ENCODE measurements at regions of chr17 and their contacts with region 1.

Region 1: GRCh38 chr17:58112970-58113631 is 29.9 kb downstream of the DYNLL2 start:
- DNase-seq: peak; percentile 54 to 66 (median 62)
- H3K4me3 ChIP-seq: no peak overlapping the region
- H3K4me3 Mint-ChIP-seq: no peak overlapping the region
- H3K27ac ChIP-seq: no peak overlapping the region
- H3K27ac Mint-ChIP-seq: no peak overlapping the region
- H3K4me1 ChIP-seq: no peaks in the 10 kb centered on the region
- H3K4me1 Mint-ChIP-seq: peaks cover 2% of the 10 kb centered on the region
- H3K27me3 ChIP-seq: peaks cover 2% of the 10 kb centered on the region in 2 donors
- H3K27me3 Mint-ChIP-seq: peaks cover 6 to 16% (median 12%) of the 10 kb centered on the region in 3 donors
- CTCF ChIP-seq: peak; percentile 91

Region 2: DNA sequence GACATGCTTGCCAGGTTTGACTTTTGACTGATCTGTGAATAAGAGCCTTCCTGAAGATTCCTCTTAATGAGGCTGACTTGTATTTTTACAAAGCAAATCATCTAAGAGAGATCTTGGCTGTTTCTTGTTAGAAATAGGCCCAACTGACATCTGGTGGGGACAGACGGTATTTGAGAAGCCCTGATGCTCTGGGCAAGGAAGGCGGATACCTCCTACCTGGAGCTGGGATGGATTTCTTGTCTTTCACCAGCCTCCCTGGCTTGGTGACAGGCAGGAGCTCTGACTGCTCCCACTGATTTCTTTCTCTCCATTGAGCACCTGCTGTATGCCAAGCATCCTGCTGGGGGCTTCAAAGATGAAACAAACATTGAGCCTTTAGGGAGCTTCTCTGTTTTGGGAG is 987.7 kb before region 1 on chr17:
- intact Hi-C with region 1: loop called (anchors 5 to 10 kb)
- DNase-seq: no peak
- H3K4me3 ChIP-seq: no peak overlapping the region
- H3K4me3 Mint-ChIP-seq: no peak overlapping the region
- H3K27ac ChIP-seq: no peak overlapping the region
- H3K27ac Mint-ChIP-seq: no peak overlapping the region
- H3K4me1 ChIP-seq: no peaks in the 10 kb centered on the region
- H3K4me1 Mint-ChIP-seq: no peaks in the 10 kb centered on the region
- H3K27me3 ChIP-seq: no peaks in the 10 kb centered on the region
- H3K27me3 Mint-ChIP-seq: peaks cover 0 to 1% (median 0%) of the 10 kb centered on the region in 3 donors
- CTCF ChIP-seq: no peak

Region 3: DNA sequence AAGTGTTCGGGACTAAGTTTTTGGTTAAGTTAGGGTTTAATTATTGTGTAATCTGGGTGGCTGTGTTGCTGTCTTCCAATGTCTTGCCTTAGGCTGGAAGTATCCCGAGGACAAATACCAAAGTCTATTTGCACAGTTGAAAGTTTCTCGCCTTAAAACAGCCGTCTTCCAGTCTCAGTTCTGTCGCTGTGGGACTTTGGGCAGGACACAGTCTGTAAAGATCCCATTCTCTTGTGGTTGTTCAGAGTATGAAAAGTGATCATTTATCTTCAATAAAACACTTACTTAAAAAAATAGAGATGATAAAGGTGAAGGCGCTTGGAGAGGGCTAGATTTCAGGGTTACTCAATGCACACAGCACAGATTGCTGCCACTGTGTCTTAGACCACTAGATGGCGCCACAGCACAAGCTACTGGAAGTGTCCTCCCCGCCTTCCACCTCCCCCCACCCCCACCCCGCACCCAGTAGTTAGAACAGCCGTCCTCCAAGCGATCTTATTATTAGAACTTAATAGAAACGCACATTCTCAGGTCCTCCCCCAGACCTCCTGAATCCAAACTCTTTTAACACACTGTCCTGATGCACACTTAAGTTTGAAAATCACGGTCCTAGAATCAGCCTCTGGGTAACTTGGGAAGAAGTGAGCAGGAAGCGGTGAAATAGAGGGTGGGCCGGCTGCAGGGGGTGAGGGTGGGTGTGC is 982.2 kb before region 1 on chr17:
- intact Hi-C with region 1: loop called (anchors 5 to 10 kb)
- DNase-seq: peak; percentile 66 to 79 (median 76)
- H3K4me3 ChIP-seq: no peak overlapping the region
- H3K4me3 Mint-ChIP-seq: peak overlapping the region in 1 of 2 donors; percentile 26
- H3K27ac ChIP-seq: no peak overlapping the region
- H3K27ac Mint-ChIP-seq: peak overlapping the region in 1 of 7 donors; percentile 12
- H3K4me1 ChIP-seq: peaks cover 0 to 2% of the 10 kb centered on the region in 2 donors
- H3K4me1 Mint-ChIP-seq: peaks cover 6% of the 10 kb centered on the region
- H3K27me3 ChIP-seq: no peaks in the 10 kb centered on the region
- H3K27me3 Mint-ChIP-seq: peaks cover 3 to 11% (median 5%) of the 10 kb centered on the region in 3 donors
- CTCF ChIP-seq: peak; percentile 80

Region 4: DNA sequence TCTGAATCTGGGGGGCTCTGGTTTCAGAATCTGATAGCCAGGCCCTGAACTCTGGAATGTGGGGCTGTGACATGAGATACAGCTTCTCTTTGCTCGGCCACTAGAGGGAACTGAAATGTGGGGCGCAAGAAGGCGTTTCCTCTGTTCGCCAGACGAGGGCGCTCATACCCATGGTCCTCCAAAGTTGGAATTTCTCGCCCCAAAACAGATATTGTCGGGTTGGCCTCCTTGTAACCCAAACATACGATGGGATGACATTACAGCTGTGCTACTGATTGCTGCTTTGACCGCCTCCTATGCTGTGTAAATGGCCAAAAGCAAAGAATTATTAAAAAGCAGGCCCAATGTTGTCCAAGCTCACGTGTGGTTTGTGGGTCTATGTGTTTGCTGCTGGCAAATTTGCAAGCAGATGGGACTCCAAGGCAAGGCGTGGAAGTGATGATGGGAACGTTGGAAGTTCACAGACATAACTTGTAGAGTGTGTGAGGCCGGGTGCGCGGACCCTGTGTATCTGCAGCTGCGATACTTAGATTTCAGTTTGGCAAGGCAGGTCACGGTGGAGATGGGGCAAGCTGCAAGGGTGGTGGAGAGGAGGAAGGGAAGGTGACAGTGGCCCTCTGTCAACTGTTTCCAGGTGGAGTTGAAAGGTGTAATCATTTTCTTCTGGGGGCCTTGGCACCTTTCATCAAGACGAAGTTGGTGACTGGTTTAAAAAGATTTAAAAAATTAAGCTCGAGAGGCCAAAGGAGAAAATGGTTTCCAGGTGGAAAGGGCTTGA is 869.7 kb before region 1 on chr17:
- intact Hi-C with region 1: loop called in 1 of 2 experiments (anchors 5 kb)
- DNase-seq: peak; percentile 67 to 71 (median 70)
- H3K4me3 ChIP-seq: no peak overlapping the region
- H3K4me3 Mint-ChIP-seq: no peak overlapping the region
- H3K27ac ChIP-seq: no peak overlapping the region
- H3K27ac Mint-ChIP-seq: no peak overlapping the region
- H3K4me1 ChIP-seq: no peaks in the 10 kb centered on the region
- H3K4me1 Mint-ChIP-seq: peaks cover 1% of the 10 kb centered on the region
- H3K27me3 ChIP-seq: no peaks in the 10 kb centered on the region
- H3K27me3 Mint-ChIP-seq: peaks cover 0 to 6% (median 4%) of the 10 kb centered on the region in 3 donors
- CTCF ChIP-seq: peak; percentile 99

Region 5: GRCh38 chr17:57833179-57833939 is 279.7 kb before region 1 on chr17:
- intact Hi-C with region 1: loop called in 1 of 2 experiments (anchors 10 kb)
- DNase-seq: peak; percentile 66 to 80 (median 78)
- H3K4me3 ChIP-seq: peak overlapping the region; percentile 29 to 78 (median 69)
- H3K4me3 Mint-ChIP-seq: no peak overlapping the region
- H3K27ac ChIP-seq: peak overlapping the region; percentile 26 to 72
- H3K27ac Mint-ChIP-seq: no peak overlapping the region
- H3K4me1 ChIP-seq: peaks cover 14 to 20% of the 10 kb centered on the region in 2 donors
- H3K4me1 Mint-ChIP-seq: peaks cover 3% of the 10 kb centered on the region
- H3K27me3 ChIP-seq: no peaks in the 10 kb centered on the region
- H3K27me3 Mint-ChIP-seq: peaks cover 0 to 10% (median 2%) of the 10 kb centered on the region in 3 donors
- CTCF ChIP-seq: peak; percentile 97

Region 6: DNA sequence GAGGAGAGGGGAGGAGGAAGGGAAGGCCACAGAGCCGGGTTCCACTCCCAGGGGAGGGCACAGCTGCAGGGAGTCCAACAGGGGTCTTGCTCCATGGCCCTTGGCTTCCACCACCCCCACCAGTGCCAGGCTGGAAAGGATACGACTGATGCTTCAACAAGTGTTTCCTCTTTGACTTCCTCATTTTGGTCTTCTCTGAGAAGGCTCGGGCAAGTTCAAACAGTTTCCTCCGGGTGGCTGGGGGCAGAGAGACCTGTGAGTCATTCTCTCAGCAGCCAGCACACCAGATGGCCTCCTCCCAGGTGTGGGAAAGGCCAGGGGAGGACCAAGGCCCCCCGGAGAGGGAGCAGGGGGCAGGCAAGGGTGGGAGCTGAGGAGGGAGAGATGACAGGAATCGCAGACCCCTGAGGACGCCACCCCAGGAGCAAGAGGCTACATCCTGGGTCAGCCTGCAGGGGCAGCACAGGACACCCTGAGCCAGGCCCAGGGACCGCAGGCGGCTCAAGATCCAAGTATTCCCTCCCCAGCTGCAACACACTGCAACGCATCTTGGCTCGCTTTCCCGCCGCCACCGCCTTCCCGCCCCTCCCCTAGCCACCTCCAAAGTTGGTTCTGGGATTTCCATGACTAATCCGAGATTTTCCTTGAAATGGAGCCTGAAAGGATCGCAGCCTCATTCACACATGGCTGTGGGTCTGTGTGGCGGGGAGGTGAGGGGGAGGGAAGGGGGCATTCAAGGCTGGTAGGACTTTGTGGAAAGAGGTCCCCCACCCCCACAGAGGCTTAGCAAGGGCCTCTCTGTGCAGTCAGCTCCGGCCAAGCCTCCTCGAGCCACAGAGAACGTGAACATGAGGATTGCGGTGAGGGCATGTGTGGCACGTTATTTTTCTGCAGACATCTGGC is 244.8 kb before region 1 on chr17:
- intact Hi-C with region 1: loop called in 1 of 2 experiments (anchors 10 kb)
- DNase-seq: peak; percentile 78 to 92 (median 86)
- H3K4me3 ChIP-seq: no peak overlapping the region
- H3K4me3 Mint-ChIP-seq: peak overlapping the region; percentile 26 to 56
- H3K27ac ChIP-seq: peak overlapping the region; percentile 33 to 62
- H3K27ac Mint-ChIP-seq: peak overlapping the region; percentile 56 to 89 (median 76)
- H3K4me1 ChIP-seq: peaks cover 40 to 43% of the 10 kb centered on the region in 2 donors
- H3K4me1 Mint-ChIP-seq: peaks cover 44% of the 10 kb centered on the region
- H3K27me3 ChIP-seq: no peaks in the 10 kb centered on the region
- H3K27me3 Mint-ChIP-seq: peaks cover 7 to 13% (median 11%) of the 10 kb centered on the region in 3 donors
- CTCF ChIP-seq: peak; percentile 69

Region 7: GRCh38 chr17:58082870-58083490 is 30.1 kb before region 1 on chr17 and contains the start of gene DYNLL2:
- intact Hi-C with region 1: no loop called
- DNase-seq: peak; percentile 82 to 89 (median 84)
- H3K4me3 ChIP-seq: peak within 1 kb of the TSS; percentile 70 to 86 (median 78)
- H3K4me3 Mint-ChIP-seq: peak within 1 kb of the TSS; percentile 88
- H3K27ac ChIP-seq: peak within 1 kb of the TSS; percentile 51 to 89
- H3K27ac Mint-ChIP-seq: peak within 1 kb of the TSS; percentile 74 to 93 (median 83)
- H3K4me1 ChIP-seq: peaks cover 18 to 23% of the 10 kb centered on the region in 2 donors
- H3K4me1 Mint-ChIP-seq: peaks cover 28% of the 10 kb centered on the region
- H3K27me3 ChIP-seq: no peaks in the 10 kb centered on the region
- H3K27me3 Mint-ChIP-seq: peaks cover 0 to 17% (median 5%) of the 10 kb centered on the region in 3 donors
- CTCF ChIP-seq: no peak
- polyA plus RNA-seq, gene DYNLL2: 0.30 to 9.9 (median 0.42) TPM